ENCODE measurements at regions of chr1 and their contacts with region 1.

Region 1: GRCh38 chr1:113403065-113403464 is 12.8 kb downstream of the MAGI3 start:
- DNase-seq: no peak
- ATAC-seq: no peak
- H3K4me3 ChIP-seq: no peak overlapping the region
- H3K27ac ChIP-seq: no peak overlapping the region
- H3K4me1 ChIP-seq: no peaks in the 10 kb centered on the region
- H3K27me3 ChIP-seq: peaks cover 0 to 3% of the 10 kb centered on the region in 2 experiments; a peak in 2 of 5 replicates
- CTCF ChIP-seq: no peak
- EP300 ChIP-seq: no peak
- POLR2A ChIP-seq: no peak
- RAD21 ChIP-seq: no peak

Region 2: DNA sequence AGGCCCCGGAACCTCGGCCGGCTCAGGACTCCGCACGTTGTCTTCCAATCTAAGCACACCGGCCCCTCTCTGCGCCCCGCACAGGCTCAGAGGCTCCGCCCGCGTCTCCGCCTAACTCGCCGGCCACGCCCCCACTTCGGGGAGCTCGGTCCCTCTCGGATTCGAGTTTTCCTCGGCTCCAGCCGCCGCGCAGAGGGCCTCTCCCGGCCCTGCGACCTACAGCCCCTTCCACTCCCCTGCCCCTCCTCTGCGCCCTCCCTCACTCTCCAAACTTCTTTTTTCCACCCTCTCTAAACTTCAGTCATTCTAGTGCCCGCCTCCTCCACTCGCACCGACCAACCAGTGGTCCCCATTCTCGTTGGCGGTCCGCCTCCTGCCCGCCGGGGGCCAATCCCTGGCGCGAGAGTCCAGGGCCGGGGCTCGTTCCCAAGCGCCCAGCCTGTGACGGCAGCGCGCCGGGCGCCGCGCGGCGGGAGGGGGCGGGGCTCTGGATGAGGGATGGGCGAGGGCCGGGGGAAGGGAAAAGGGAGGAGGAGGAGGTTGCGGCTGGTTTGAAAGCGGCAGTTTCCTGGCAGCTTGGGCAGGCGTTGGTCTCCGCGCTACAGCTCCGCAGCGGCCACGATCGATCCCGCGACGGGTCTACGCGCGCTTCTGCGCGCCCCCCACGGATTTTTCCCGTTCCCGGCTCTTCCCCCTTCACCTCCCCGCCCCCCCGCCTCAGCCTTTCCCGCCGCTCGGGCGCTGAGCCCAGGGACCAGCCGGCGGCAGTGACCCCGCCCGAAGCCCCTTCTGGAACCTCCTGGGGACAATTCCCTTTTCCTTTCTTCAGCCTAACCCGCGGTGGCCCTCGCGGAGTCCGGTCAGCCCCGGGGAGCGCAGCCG is 12.9 kb before region 1 on chr1 and contains the start of gene MAGI3:
- CTCF ChIA-PET with region 1: no interaction called
- POLR2A ChIA-PET with region 1: interaction called, 13 read pairs
- in situ Hi-C with region 1: no loop called
- intact Hi-C with region 1: no loop called
- DNase-seq: peak; percentile 97 to 98 (median 98)
- ATAC-seq: peak; percentile 99
- H3K4me3 ChIP-seq: peak within 1 kb of the TSS; percentile 55
- H3K27ac ChIP-seq: peak within 1 kb of the TSS; percentile 52
- H3K4me1 ChIP-seq: peaks cover 17 to 23% of the 10 kb centered on the region in 2 experiments; a peak in 4 of 5 replicates
- H3K27me3 ChIP-seq: peaks cover 6 to 13% of the 10 kb centered on the region in 2 experiments; a peak in 4 of 5 replicates
- CTCF ChIP-seq: 0 out of 6 replicates have a peak, but pooled peaks of 1 of the 3 experiments have one; percentile 4
- EP300 ChIP-seq: no peak
- POLR2A ChIP-seq: peak; percentile 64
- RAD21 ChIP-seq: peak in 1 of 2 experiments; percentile 7; a peak in 2 of 4 replicates
- polyA plus RNA-seq, gene MAGI3: 1.0 to 1.2 TPM

Region 3: GRCh38 chr1:113714606-113715275 is 311.7 kb after region 1 on chr1:
- CTCF ChIA-PET with region 1: no interaction called
- POLR2A ChIA-PET with region 1: no interaction called
- in situ Hi-C with region 1: no loop called
- intact Hi-C with region 1: no loop called
- DNase-seq: no peak
- ATAC-seq: peak; percentile 29; the same call in 1 of the 3 replicates
- H3K4me3 ChIP-seq: no peak overlapping the region
- H3K27ac ChIP-seq: no peak overlapping the region
- H3K4me1 ChIP-seq: no peaks in the 10 kb centered on the region
- H3K27me3 ChIP-seq: no peaks in the 10 kb centered on the region
- CTCF ChIP-seq: peak in 2 of 3 experiments; percentile 17 to 24; a peak in 2 of 6 replicates
- EP300 ChIP-seq: no peak
- POLR2A ChIP-seq: no peak
- RAD21 ChIP-seq: peak in 1 of 2 experiments; percentile 45; a peak in 2 of 4 replicates